Transverse colon (tissue), 4 donors: ENCODE measurements at regions of chr12 and their contacts with region 1.

Region 1: DNA sequence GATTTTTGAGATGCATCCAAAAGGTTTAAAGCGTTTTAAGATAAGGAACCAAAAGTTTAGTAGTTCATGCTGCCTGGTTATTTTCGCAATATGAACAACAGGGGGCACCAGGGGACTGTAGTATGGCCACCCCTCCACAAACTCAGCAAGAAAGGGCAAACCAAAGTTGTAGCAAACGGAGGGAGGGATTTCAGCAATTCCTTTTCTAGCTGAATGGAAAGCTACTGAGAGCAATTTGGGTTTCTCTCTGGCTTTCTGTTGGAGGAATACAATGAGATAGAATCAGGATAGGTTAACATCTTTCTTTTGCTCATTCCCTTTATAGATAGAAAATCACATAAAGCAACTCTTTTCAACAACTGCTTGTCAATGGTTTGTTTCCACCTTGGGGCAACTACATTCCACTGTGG is 62.5 kb downstream of the DRAM1 start:
- DNase-seq: peak; percentile 60
- H3K4me3 ChIP-seq: no peak overlapping the region
- H3K27ac ChIP-seq: peak overlapping the region in 3 of 4 donors; percentile 6 to 32 (median 20)
- H3K4me1 ChIP-seq: peaks cover 0 to 10% (median 2%) of the 10 kb centered on the region in 4 donors
- H3K27me3 ChIP-seq: no peaks in the 10 kb centered on the region
- CTCF ChIP-seq: peak; percentile 63 to 72 (median 65)
- EP300 ChIP-seq: no peak
- POLR2A ChIP-seq: no peak

Region 2: DNA sequence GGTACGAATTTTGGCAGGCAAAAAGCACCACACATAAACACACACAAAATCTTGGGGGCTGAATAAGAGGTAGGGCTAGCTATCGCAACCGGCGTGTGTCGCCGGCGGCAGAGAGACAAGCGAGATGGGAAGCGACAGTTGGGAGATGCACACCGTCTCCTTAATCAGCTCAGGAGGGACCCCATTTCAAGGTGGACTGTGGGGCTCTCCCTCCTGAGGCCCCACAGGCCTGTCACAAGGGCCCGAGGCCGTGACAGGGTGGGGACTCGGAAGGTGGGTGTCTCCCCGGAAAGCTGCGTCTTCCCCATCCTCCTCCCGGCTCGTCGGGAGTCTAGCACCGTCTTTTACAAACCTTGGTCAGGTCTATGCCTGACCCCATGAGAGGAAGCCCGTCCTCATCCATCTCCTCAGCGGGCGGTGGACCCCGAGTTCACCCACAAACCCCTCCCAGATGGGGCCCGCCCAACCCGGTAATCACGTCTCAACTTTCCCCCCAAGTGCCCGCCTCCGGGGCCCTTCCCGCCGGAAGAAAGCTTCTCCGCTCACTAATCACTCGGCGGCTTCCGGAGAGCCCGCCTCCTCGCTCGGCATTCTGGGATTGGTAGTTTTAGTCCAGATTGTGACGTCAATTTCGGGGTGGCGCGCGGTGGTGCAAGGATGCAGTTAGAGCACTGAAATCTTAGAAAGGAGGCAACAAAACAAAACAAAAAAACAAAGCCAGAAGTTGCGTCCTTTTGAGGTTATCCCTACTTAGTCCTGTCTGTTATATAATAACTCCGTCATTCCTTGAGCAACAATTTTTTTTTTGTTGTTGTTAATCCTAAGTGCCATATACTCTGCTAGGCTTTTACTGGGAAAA is 121.9 kb after region 1 on chr12 and contains the start of gene WASHC3:
- in situ Hi-C with region 1: no loop called
- intact Hi-C with region 1: loop called (anchors 10 kb)
- DNase-seq: peak; percentile 96
- H3K4me3 ChIP-seq: peak within 1 kb of the TSS; percentile 71 to 83 (median 74)
- H3K27ac ChIP-seq: peak within 1 kb of the TSS; percentile 89 to 92 (median 90)
- H3K4me1 ChIP-seq: peaks cover 3 to 8% (median 5%) of the 10 kb centered on the region in 4 donors
- H3K27me3 ChIP-seq: no peaks in the 10 kb centered on the region
- CTCF ChIP-seq: no peak
- EP300 ChIP-seq: no peak
- POLR2A ChIP-seq: peak; percentile 76
- total RNA-seq, gene WASHC3: 18.7 to 78.6 (median 52.3) TPM

Region 3: DNA sequence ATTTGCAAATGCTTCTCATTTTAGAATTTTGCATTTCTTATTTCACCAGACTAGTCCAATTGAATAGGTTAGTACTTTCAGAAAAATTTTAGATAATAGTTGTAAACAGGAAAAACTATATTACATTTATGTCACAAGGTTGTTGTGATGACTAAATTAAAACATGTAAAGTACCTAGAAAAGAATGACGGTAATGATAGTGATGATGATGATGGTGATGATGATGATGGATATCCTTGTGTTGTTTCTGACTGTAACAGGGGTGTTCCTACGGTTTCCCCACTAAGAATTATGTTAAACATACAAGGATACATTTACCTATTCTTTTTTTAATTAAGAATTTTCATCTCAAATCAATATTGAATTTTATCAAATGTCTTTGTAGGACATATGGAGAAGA is 306.2 kb after region 1 on chr12:
- in situ Hi-C with region 1: no loop called
- intact Hi-C with region 1: no loop called
- DNase-seq: no peak
- H3K4me3 ChIP-seq: no peak overlapping the region
- H3K27ac ChIP-seq: no peak overlapping the region
- H3K4me1 ChIP-seq: no peaks in the 10 kb centered on the region
- H3K27me3 ChIP-seq: no peaks in the 10 kb centered on the region
- CTCF ChIP-seq: no peak
- EP300 ChIP-seq: no peak
- POLR2A ChIP-seq: no peak

Region 4: DNA sequence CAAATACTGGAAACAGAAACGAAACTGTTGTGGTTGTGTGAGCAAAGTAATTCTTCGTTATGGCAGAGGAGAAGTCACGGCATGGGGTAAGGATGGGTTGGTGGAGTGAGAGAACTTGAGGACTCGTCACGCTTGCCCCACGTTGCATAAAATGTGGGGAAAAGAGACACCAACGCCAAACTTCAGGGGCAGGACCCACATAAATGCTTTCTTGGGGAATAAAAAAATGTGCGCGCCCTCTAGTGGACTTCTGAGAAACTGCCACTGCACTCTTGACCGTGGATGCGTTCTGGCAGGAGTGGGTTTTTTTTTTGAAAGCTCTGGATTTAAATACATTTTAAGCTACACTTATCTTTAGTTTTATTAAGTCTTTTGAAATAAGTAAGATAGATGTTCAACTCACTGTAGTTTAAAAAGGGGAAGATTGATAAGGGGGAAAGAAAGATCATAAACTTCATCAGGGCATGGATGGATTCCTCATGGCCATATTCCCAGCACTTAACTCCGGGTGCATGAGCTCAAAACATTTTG is 544.6 kb after region 1 on chr12:
- in situ Hi-C with region 1: loop called (anchors 10 to 25 kb)
- intact Hi-C with region 1: loop called (anchors 5 kb)
- DNase-seq: peak; percentile 54
- H3K4me3 ChIP-seq: peak overlapping the region in 2 of 4 donors; percentile 15 to 26
- H3K27ac ChIP-seq: peak overlapping the region; percentile 35 to 60 (median 36)
- H3K4me1 ChIP-seq: peaks cover 0 to 22% (median 4%) of the 10 kb centered on the region in 4 donors
- H3K27me3 ChIP-seq: no peaks in the 10 kb centered on the region
- CTCF ChIP-seq: peak; percentile 69 to 95 (median 88)
- EP300 ChIP-seq: no peak
- POLR2A ChIP-seq: no peak